Activated naive CD4-positive, alpha-beta T cell treated with anti-CD3 and anti-CD28 coated beads for 36 hours (primary cell): ENCODE measurements at regions of chr11 and their contacts with region 1.

Region 1: DNA sequence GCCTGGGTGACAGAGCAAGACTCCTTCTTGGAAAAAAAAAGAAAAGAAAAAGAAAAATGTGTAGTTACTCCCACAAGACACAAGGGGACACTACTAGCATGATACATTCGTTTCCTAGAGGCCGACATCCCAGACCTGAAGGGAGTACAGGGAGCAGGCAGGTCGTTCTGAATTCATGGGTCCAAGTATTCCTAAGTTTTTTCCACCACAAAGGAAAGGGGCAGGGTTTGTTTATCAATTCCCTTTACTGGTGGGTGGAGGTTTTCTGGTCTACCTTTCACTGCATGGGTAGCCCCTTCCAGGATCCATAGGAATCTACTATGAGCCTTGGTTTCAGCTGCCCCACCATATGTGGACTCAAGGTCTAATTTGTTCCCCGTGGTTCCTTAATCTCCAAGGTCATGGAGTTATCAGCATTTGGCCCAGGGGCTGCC is 11.8 kb downstream of the TIGD3 start:
- DNase-seq: peak; percentile 46
- H3K4me3 Mint-ChIP-seq: no peak overlapping the region
- H3K27ac Mint-ChIP-seq: no peak overlapping the region
- H3K4me1 Mint-ChIP-seq: peaks cover 4% of the 10 kb centered on the region
- H3K27me3 Mint-ChIP-seq: no peaks in the 10 kb centered on the region

Region 2: GRCh38 chr11:65069217-65069616 is 297.1 kb before region 1 on chr11:
- CTCF ChIA-PET with region 1: no interaction called
- intact Hi-C with region 1: no loop called
- DNase-seq: no peak
- H3K4me3 Mint-ChIP-seq: no peak overlapping the region
- H3K27ac Mint-ChIP-seq: no peak overlapping the region
- H3K4me1 Mint-ChIP-seq: peaks cover 2% of the 10 kb centered on the region
- H3K27me3 Mint-ChIP-seq: no peaks in the 10 kb centered on the region

Region 3: GRCh38 chr11:65204143-65204542 is 162.2 kb before region 1 on chr11:
- CTCF ChIA-PET with region 1: no interaction called
- intact Hi-C with region 1: no loop called
- DNase-seq: no peak
- H3K4me3 Mint-ChIP-seq: no peak overlapping the region
- H3K27ac Mint-ChIP-seq: no peak overlapping the region
- H3K4me1 Mint-ChIP-seq: no peaks in the 10 kb centered on the region
- H3K27me3 Mint-ChIP-seq: no peaks in the 10 kb centered on the region

Region 4: GRCh38 chr11:65506770-65507505 is 140.6 kb after region 1 on chr11:
- CTCF ChIA-PET with region 1: interaction called, 11 read pairs
- intact Hi-C with region 1: loop called (anchors 1 kb)
- DNase-seq: peak; percentile 80
- H3K4me3 Mint-ChIP-seq: no peak overlapping the region
- H3K27ac Mint-ChIP-seq: no peak overlapping the region
- H3K4me1 Mint-ChIP-seq: peaks cover 40% of the 10 kb centered on the region
- H3K27me3 Mint-ChIP-seq: no peaks in the 10 kb centered on the region